ENCODE measurements at regions of chr4 and their contacts with region 1.

Region 1: DNA sequence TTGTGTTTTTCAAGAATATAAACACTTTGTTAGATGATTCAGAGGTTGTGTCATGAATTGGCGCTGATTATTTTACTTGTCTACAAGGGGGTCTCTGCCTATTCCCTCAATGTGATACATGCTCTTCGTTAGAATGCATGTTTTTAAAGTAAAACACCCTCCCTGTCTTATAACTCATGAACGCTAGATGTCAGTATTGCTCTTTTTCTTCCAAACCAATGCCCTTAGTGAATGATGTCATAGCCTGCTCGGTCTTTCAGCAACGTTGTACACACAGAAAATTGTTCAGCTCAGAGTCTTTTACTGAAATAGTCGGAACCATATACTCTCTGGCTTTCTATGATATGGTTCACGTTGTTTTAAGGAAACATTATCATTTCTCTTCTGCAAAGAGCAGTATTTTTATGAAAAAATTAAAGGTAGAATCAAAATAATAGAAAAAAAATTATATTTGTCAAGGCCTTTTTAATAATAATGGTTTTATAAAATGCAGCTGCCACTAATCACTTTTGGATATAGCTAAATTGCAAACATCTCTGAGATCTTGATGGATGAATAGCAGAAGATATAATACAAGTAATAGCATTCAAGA is 292.9 kb downstream of the TLL1 start:
- DNase-seq: peak; percentile 16
- H3K4me3 ChIP-seq: no peak overlapping the region
- H3K27ac ChIP-seq: no peak overlapping the region
- H3K27me3 ChIP-seq: no peaks in the 10 kb centered on the region
- CTCF ChIP-seq: peak; percentile 71

Region 2: DNA sequence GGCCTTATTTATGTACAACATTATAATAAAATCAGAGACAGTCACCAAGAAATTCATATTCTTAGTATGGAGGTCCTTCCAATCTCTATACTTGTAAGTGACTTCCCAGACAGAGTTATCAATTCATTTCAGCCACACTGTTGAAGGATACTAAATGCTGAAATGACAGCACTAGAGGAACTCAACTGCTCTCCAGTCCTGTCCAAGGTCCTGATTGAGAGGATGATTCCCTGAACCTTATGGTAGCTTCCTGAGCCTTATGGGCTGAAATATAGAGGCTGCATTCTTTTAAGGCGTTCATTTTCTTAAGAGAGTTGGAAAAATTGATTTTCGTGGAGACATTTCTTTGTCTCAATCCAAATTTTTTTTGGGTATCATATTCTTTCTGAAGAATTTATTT is 87.0 kb before region 1 on chr4:
- CTCF ChIA-PET with region 1: no interaction called
- POLR2A ChIA-PET with region 1: no interaction called
- DNase-seq: no peak
- H3K4me3 ChIP-seq: no peak overlapping the region
- H3K27ac ChIP-seq: no peak overlapping the region
- H3K27me3 ChIP-seq: no peaks in the 10 kb centered on the region
- CTCF ChIP-seq: no peak

Region 3: DNA sequence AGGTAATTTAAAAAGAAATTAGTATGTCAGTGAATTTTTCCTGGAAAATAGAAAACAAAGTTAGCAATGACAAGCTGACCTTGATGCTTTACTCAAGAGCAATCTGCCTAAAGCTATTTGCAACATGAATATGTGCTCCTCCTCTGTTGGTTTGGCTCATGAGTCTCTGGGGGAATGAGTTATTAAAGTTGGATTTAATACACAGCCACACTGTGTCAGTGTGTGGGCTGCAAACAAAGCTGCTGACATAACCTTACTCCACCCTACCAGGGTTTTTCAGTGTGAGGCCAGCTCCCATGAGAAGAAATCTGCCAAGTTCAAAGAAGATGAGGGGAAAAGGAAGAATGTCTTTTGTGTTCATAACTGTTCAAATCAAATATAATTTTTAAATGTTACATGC is 12.4 kb before region 1 on chr4:
- CTCF ChIA-PET with region 1: interaction called, 10 read pairs
- POLR2A ChIA-PET with region 1: no interaction called
- DNase-seq: no peak
- H3K4me3 ChIP-seq: no peak overlapping the region
- H3K27ac ChIP-seq: no peak overlapping the region
- H3K27me3 ChIP-seq: no peaks in the 10 kb centered on the region
- CTCF ChIP-seq: no peak

Region 4: GRCh38 chr4:166594326-166594946 is 428.5 kb after region 1 on chr4:
- CTCF ChIA-PET with region 1: interaction called, 59 read pairs
- POLR2A ChIA-PET with region 1: no interaction called
- DNase-seq: no peak
- H3K4me3 ChIP-seq: no peak overlapping the region
- H3K27ac ChIP-seq: no peak overlapping the region
- H3K27me3 ChIP-seq: no peaks in the 10 kb centered on the region
- CTCF ChIP-seq: peak; percentile 58

Region 5: GRCh38 chr4:167622481-167623246 is 1456.7 kb after region 1 on chr4:
- CTCF ChIA-PET with region 1: interaction called, 13 read pairs
- POLR2A ChIA-PET with region 1: no interaction called
- DNase-seq: peak; percentile 3
- H3K4me3 ChIP-seq: no peak overlapping the region
- H3K27ac ChIP-seq: no peak overlapping the region
- H3K27me3 ChIP-seq: no peaks in the 10 kb centered on the region
- CTCF ChIP-seq: peak; percentile 81

Measured in AG04450 (cell line).